B cell (primary cell): ENCODE measurements at regions of chr6 and their contacts with region 1.

Region 1: DNA sequence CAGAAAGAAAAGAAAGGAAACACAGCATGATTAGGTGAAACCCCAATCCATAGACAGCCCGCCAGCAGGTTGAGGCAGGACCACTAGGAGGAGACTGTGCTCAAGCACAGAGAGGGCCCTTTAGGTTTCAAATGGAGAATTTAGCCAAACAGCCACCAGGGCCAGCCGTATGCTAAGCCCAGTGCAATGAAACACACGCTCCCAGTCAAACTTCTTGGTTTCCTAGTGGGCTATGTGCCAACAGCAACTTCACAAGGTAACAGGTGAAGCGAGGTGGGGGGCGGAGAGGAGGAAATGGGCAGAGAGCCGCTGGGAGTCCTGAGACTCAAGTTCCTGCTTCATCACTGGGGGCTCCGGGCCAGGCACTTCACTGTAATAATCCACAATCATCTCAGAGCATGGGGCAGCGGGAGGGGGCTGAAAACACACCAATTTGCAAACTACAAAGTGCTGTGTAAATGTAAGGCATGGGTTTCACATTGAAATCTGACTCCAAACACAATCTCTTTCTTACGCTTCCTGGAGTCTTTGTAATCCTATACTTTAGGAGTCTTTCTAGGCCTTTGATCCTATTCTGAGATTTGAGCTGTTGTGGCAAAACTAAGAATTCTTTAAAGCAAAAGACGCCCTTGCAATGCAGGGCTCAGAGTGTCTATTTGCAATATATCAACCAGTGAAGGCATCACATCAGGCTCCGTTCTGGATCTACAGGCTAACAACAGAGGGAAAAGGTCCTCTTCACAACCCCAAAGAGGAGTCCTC is 117.3 kb downstream of the OPRM1 start:
- DNase-seq: peak; percentile 44
- ATAC-seq: peak; percentile 45
- H3K4me3 ChIP-seq: peak overlapping the region in 1 of 5 experiments; percentile 17
- H3K4me3 Mint-ChIP-seq: peak overlapping the region; percentile 77
- H3K27ac ChIP-seq: no peak overlapping the region
- H3K27ac Mint-ChIP-seq: peak overlapping the region; percentile 15
- H3K4me1 ChIP-seq: peaks cover 16 to 17% of the 10 kb centered on the region in 2 donors
- H3K4me1 Mint-ChIP-seq: peaks cover 21% of the 10 kb centered on the region
- H3K27me3 ChIP-seq: no peaks in the 10 kb centered on the region
- H3K27me3 Mint-ChIP-seq: no peaks in the 10 kb centered on the region
- CTCF ChIP-seq: peak; percentile 34

Region 2: GRCh38 chr6:153966001-153966400 is 190.3 kb before region 1 on chr6:
- CTCF ChIA-PET with region 1: no interaction called
- POLR2A ChIA-PET with region 1: no interaction called
- intact Hi-C with region 1: no loop called
- DNase-seq: no peak
- ATAC-seq: no peak
- H3K4me3 ChIP-seq: no peak overlapping the region
- H3K4me3 Mint-ChIP-seq: no peak overlapping the region
- H3K27ac ChIP-seq: no peak overlapping the region
- H3K27ac Mint-ChIP-seq: no peak overlapping the region
- H3K4me1 ChIP-seq: no peaks in the 10 kb centered on the region
- H3K4me1 Mint-ChIP-seq: no peaks in the 10 kb centered on the region
- H3K27me3 ChIP-seq: no peaks in the 10 kb centered on the region
- H3K27me3 Mint-ChIP-seq: no peaks in the 10 kb centered on the region
- CTCF ChIP-seq: no peak

Region 3: DNA sequence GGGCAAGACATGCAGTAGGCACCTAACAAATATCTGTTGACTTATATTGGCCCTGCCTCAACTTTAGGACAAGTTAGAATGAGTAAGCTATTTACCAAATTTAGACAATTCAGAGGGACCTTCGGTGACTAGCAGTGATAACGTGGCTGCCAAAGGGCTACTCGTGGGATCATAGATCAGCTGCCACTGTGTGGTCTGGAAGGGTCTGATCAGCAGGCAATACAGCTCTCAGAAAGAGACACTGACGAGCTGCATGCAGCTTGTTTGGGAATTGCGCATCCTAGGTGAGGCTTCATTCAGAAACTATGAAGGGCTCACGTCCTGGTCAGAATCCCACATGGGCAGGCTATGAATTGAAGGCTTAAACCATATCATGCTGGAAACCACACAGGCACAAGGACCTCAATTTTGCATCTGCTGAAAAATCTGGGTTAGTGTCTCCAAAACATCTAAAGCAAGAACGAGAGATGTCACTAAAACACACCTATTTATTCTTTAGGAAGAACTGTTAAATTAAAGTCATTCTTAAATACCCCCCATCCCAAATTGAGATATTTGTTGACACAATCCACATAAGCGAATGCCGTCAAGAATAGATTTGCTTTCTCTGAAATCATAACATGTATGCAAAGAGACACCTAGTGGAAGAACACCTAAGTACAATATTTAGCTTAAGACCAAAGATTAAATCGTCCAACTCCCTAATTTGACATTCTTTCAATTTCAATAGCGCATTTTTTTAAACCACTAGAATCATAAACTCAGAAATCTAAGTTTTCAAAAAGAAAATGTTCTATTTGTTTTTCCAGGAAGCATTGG is 120.7 kb after region 1 on chr6:
- CTCF ChIA-PET with region 1: interaction called, 21 read pairs
- POLR2A ChIA-PET with region 1: no interaction called
- intact Hi-C with region 1: loop called (anchors 1 kb)
- DNase-seq: peak; percentile 35
- ATAC-seq: no peak
- H3K4me3 ChIP-seq: no peak overlapping the region
- H3K4me3 Mint-ChIP-seq: peak overlapping the region; percentile 24
- H3K27ac ChIP-seq: no peak overlapping the region
- H3K27ac Mint-ChIP-seq: no peak overlapping the region
- H3K4me1 ChIP-seq: peaks cover 4% of the 10 kb centered on the region in 2 donors
- H3K4me1 Mint-ChIP-seq: peaks cover 10% of the 10 kb centered on the region
- H3K27me3 ChIP-seq: no peaks in the 10 kb centered on the region
- H3K27me3 Mint-ChIP-seq: no peaks in the 10 kb centered on the region
- CTCF ChIP-seq: peak; percentile 48

Region 4: DNA sequence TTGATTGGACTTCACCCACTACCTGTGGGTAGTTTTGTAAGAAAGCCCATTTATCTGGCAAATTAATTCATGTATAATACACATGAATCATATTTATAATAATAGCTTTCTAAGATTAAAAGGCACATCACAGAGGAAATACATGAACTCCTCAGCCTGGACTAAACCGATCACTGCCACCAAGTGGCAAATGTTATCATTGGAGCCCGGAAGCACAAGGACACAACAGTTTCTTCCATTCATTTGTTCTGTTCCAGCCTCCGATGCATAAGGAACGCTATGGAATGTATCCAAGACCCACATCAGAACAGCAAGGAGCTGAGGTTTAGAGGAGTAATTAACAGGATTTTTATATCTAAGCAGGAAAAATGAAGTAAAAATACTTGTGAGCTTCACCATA is 214.2 kb after region 1 on chr6:
- CTCF ChIA-PET with region 1: interaction called, 19 read pairs
- POLR2A ChIA-PET with region 1: no interaction called
- intact Hi-C with region 1: no loop called
- DNase-seq: no peak
- ATAC-seq: no peak
- H3K4me3 ChIP-seq: no peak overlapping the region
- H3K4me3 Mint-ChIP-seq: no peak overlapping the region
- H3K27ac ChIP-seq: no peak overlapping the region
- H3K27ac Mint-ChIP-seq: no peak overlapping the region
- H3K4me1 ChIP-seq: no peaks in the 10 kb centered on the region
- H3K4me1 Mint-ChIP-seq: no peaks in the 10 kb centered on the region
- H3K27me3 ChIP-seq: no peaks in the 10 kb centered on the region
- H3K27me3 Mint-ChIP-seq: peaks cover 6% of the 10 kb centered on the region
- CTCF ChIP-seq: no peak